MCF 10A (cell line): ENCODE measurements at regions of chr9 and their contacts with region 1.

Region 1: DNA sequence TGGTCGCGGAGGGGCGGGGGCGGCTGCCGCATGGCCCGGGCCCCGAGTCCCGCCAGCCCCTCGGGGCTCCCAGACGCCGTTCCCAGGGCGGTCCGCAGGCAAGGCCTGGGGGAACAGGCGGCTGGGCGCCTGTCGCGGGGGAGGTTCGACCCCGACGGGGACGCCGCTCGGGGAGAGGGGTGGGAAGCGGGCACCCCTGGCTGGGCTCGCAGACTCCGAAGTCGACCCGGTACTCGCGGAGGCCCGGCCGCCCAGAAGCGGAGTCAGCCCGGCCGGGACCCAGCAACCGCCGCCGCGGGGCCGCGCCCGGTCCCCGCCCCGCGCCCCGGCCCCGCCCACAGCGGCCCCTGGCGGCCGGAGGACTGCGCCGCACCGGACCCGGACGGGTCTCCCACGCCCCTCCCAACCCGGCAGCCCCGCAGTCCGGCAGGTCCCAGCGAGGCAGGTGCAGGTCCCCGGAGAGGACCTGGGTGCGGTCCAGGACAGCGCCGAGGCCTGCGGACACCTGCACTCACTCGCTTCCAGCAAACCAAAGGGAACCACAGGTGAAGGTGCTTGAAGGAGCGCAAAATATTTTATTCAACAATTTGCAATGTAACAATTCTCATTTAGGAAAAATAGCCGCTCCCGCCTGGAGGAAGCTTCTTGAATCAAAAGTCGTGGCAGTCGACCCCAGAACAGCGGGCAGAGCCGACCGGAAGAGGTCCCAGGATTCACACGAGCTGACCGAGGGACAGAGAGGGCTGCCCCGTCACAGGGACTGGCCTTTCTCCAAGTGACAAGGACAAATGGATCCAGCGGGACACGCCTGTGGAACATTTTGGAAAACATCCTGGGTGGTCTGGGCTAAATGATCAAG is at the start of gene INPP5E:
- DNase-seq: peak; percentile 61
- H3K4me3 Mint-ChIP-seq: peak within 1 kb of the TSS; percentile 76
- H3K27ac Mint-ChIP-seq: peak within 1 kb of the TSS; percentile 31
- H3K4me1 Mint-ChIP-seq: peaks cover 16% of the 10 kb centered on the region
- H3K27me3 Mint-ChIP-seq: no peaks in the 10 kb centered on the region
- CTCF ChIP-seq: peak; percentile 86
- total RNA-seq, gene INPP5E: 16.3 and 17.4 TPM in 2 replicates

Region 2: DNA sequence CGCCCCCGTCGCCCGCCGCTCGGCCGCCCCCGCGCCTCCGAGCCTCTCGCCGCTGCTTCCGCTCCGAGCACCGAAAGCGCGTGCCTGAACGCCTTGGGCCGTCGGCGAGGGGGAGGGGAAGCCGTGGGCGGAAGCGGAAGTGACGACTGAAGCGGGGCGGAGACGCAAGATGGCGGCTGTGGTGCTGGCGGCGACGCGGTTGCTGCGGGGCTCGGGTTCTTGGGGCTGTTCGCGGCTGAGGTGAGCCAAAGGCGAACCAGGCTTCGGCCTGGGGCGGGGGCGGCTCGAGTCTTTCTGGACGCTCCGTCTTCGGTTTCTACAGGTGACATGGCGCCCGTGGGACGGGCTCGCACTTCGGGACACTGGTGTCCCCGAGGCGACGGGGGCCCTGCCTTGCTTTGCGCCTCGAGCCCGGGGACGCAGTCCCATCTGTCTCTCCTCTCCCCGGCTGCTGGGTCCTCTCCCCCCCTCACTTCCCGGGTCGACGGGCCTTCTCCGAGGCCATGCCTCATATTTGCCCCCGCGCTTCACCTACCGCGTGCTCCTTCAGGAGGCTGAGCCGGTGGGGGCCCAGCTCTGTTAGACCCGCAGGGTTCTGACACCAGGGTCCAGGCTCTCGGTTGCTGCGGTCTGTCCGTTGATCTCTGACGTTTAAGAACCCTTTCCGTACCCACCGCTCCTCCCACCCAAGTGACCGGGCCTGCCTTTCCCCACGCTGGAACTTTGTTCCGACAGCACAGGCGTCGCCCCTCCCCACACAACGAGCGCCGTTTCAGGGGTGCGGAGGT is 29.1 kb before region 1 on chr9 and contains the starts of genes ENTR1 and PMPCA:
- CTCF ChIA-PET with region 1: interaction called, 3 read pairs
- POLR2A ChIA-PET with region 1: interaction called, 34 read pairs
- intact Hi-C with region 1: no loop called
- DNase-seq: peak; percentile 90
- H3K4me3 Mint-ChIP-seq: peak within 1 kb of the TSS; percentile 96
- H3K27ac Mint-ChIP-seq: peak within 1 kb of the TSS; percentile 97
- H3K4me1 Mint-ChIP-seq: peaks cover 19% of the 10 kb centered on the region
- H3K27me3 Mint-ChIP-seq: no peaks in the 10 kb centered on the region
- CTCF ChIP-seq: no peak
- total RNA-seq, gene ENTR1: 58.9 and 82.2 TPM in 2 replicates
- total RNA-seq, gene PMPCA: 66.0 and 66.3 TPM in 2 replicates